ENCODE measurements at regions of chr12 and their contacts with region 1.

Region 1: GRCh38 chr12:12356886-12357718 is at the start of gene BORCS5:
- DNase-seq: peak; percentile 100
- ATAC-seq: peak; percentile 92
- H3K4me3 ChIP-seq: peak within 1 kb of the TSS; percentile 74 to 93 (median 81)
- H3K4me3 Mint-ChIP-seq: peak within 1 kb of the TSS; percentile 92
- H3K27ac ChIP-seq: peak within 1 kb of the TSS; percentile 91 to 95
- H3K27ac Mint-ChIP-seq: peak within 1 kb of the TSS; percentile 94
- H3K4me1 ChIP-seq: peaks cover 21 to 25% of the 10 kb centered on the region in 2 donors
- H3K4me1 Mint-ChIP-seq: peaks cover 31% of the 10 kb centered on the region
- H3K27me3 ChIP-seq: no peaks in the 10 kb centered on the region
- H3K27me3 Mint-ChIP-seq: peaks cover 3% of the 10 kb centered on the region
- CTCF ChIP-seq: peak; percentile 11
- total RNA-seq, gene BORCS5: 46.2 and 51.7 TPM in 2 replicates

Region 2: DNA sequence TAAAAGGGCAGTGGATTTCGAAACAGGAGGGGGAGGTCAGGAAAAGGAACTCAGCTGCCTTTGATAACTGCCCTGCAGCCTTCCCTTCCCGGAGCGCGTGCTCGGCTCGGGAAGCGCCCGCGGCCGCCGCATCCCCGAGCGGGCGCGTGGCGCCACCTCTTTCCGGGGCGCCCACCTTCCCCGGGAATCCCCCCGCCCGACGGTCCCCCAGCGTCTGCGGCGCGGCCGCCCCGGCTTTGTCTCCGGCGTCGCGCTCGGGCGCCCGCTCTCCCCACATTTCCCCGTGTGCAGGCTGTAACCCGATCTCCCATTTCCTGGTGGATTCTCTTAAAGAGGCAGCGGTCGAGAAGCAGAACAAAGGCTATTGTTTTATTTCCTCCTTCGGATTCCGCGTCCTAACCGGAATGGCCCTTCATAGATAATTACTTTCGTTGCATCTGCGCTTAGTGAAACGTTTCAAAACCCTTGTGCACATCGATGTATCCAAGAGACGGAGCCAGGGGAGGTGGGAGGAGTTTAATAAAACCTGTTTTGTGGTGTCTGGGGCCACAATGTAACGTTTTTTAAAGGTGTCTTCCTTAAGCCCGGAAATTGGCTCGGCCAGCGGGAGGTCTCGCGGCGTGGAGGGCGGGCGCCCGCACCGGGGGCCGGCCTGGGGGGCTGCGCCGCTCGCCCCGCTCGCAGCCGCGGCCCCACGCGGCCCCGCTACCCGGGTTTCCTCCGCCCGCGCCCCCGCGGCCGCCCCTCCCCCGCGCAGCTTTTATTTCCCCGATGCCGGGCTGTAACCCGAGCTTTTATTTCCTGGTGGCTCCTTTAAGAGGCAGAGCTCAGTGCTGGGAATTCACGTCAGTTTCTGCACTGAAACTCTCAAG is 708.0 kb before region 1 on chr12 and contains the start of gene ETV6:
- CTCF ChIA-PET with region 1: no interaction called
- POLR2A ChIA-PET with region 1: no interaction called
- intact Hi-C with region 1: loop called (anchors 5 kb)
- DNase-seq: peak; percentile 86
- ATAC-seq: peak; percentile 48
- H3K4me3 ChIP-seq: peak within 1 kb of the TSS; percentile 77 to 96 (median 87)
- H3K4me3 Mint-ChIP-seq: peak within 1 kb of the TSS; percentile 93
- H3K27ac ChIP-seq: peak within 1 kb of the TSS; percentile 72 to 81
- H3K27ac Mint-ChIP-seq: peak within 1 kb of the TSS; percentile 97
- H3K4me1 ChIP-seq: peaks cover 24 to 29% of the 10 kb centered on the region in 2 donors
- H3K4me1 Mint-ChIP-seq: peaks cover 34% of the 10 kb centered on the region
- H3K27me3 ChIP-seq: no peaks in the 10 kb centered on the region
- H3K27me3 Mint-ChIP-seq: no peaks in the 10 kb centered on the region
- CTCF ChIP-seq: no peak
- total RNA-seq, gene ETV6: 123 and 131 TPM in 2 replicates

Region 3: DNA sequence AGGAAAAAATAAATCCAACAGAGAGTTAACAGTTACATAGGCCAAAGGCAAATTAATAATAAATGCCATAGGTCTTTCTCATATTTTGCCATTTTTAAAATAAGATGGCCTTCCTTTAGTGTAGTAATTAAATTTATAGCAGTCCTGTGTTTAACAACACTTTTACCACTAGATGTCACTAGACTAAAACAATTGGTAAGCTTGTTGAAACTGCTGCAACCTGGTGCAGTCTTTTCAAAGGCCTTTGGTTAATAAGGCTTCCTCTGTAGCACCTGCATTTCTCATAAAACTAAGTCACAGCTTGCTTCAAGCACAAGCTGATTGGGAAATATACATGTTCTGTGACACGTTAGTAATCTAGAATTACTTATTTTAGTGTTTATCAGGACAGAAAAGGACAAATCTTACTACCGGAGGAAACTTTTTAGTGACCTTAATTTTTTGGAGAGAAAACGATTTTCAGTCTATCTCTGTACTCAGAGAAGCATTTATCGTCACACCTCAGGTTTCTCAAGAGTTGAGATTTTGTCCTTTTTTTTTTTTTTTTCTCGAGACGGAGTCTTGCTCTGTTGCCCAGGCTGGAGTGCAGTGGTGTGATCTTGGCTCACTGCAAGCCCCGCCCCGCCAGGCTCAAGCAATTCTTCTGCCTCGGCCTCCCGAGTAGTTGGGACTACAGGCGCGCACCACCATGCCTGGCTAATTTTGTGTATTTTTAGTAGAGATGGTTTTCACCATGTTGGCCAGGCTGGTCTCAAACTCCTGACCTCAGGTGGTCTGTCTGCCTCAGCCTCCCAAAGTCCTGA is 19.7 kb after region 1 on chr12:
- CTCF ChIA-PET with region 1: interaction called, 20 read pairs
- POLR2A ChIA-PET with region 1: no interaction called
- intact Hi-C with region 1: loop called (anchors 1 kb)
- DNase-seq: peak; percentile 78
- ATAC-seq: peak; percentile 64
- H3K4me3 ChIP-seq: no peak overlapping the region
- H3K4me3 Mint-ChIP-seq: no peak overlapping the region
- H3K27ac ChIP-seq: no peak overlapping the region
- H3K27ac Mint-ChIP-seq: no peak overlapping the region
- H3K4me1 ChIP-seq: peaks cover 10 to 12% of the 10 kb centered on the region in 2 donors
- H3K4me1 Mint-ChIP-seq: peaks cover 21% of the 10 kb centered on the region
- H3K27me3 ChIP-seq: no peaks in the 10 kb centered on the region
- H3K27me3 Mint-ChIP-seq: no peaks in the 10 kb centered on the region
- CTCF ChIP-seq: peak; percentile 79

Region 4: DNA sequence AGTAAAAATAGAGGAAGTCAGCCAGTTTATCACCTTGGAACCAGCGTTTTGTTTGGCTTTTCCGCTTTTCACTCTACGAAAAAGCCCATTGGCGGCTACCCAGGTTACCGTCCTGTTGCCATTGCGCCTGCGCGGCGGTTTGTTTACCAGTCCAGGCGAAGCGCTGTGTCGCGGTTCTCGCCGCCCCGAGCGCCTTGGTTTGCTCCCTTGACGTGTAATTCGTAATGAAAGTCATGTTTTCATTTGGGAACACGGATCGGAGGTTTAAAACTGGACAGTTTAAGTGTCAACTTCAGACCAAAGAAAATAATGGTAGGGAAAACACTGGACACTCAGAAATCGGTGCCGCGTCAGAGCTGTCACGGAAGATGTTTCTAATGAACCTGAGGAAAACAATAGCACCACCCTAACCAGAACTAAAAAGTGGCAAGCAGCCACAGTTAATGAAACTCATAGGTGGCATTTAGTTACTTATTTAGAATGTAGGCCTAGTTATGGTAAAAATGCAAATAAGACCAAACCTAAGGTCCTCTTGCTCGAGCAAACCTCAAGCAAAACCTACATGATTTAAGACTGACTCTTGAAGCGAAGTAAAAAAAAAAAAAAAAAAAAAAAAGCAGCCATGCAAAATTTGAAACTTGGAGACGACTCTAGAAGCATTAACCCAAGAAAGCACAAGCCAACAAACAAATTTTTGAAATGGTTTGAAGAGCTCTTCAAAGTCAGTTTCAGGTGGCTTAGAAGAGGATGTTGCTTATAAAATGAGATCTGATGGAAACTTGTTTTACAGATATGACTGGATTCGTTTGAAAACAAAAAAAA is 339.7 kb after region 1 on chr12:
- CTCF ChIA-PET with region 1: interaction called, 5 read pairs
- POLR2A ChIA-PET with region 1: interaction called, 19 read pairs
- intact Hi-C with region 1: loop called (anchors 1 kb)
- DNase-seq: peak; percentile 95
- ATAC-seq: peak; percentile 86
- H3K4me3 ChIP-seq: peak overlapping the region; percentile 66 to 77 (median 68)
- H3K4me3 Mint-ChIP-seq: peak overlapping the region; percentile 99
- H3K27ac ChIP-seq: peak overlapping the region; percentile 97 to 98
- H3K27ac Mint-ChIP-seq: peak overlapping the region; percentile 100
- H3K4me1 ChIP-seq: peaks cover 15 to 23% of the 10 kb centered on the region in 2 donors
- H3K4me1 Mint-ChIP-seq: peaks cover 32% of the 10 kb centered on the region
- H3K27me3 ChIP-seq: no peaks in the 10 kb centered on the region
- H3K27me3 Mint-ChIP-seq: no peaks in the 10 kb centered on the region
- CTCF ChIP-seq: no peak

Region 5: DNA sequence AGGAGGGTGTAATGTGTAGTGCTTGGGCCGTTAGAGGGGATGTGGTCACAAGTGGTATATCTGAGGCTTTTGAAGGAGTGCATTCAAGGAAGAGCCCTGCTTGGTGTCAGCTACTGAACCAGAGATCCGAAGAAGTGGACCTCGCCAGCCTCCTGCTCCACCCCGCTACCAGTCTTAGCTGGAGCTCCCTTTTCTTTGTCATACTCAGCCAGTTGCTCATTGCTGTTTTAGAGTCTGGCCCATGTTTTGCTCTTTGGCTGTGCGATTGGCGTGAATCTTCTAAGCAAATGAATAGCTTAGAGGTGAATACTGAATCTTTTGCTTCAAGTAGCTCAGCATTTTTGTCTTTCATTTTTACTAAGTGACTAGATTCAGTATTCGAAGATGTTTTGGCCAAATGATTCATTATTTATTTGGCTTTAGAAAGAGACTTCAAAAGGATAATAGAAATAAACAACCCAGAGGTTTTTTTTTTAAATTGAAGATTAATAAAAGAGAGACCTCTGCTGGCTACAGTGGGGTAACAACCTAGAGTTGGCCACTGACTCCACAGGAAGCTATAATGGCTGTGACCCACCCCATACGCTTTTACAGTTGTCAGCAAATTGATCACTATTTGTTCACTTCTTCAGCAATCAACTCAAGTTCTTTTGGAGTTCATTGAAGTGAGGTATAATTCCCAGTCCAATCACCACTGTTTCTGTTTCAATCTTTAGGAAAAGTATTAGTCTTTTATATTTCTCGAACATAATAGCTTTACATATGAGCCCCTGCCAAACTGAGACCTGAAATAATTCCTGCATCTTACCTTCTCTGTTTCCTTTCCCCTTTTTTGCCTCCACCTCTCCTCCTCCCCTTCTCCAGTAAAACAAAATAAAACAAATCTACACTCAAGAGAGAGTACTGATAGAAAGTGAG is 379.9 kb after region 1 on chr12:
- CTCF ChIA-PET with region 1: interaction called, 47 read pairs
- POLR2A ChIA-PET with region 1: interaction called, 7 read pairs
- intact Hi-C with region 1: no loop called
- DNase-seq: peak; percentile 72
- ATAC-seq: peak; percentile 87
- H3K4me3 ChIP-seq: peak overlapping the region in 3 of 5 experiments; percentile 7 to 49 (median 44)
- H3K4me3 Mint-ChIP-seq: peak overlapping the region; percentile 66
- H3K27ac ChIP-seq: peak overlapping the region; percentile 32 to 64
- H3K27ac Mint-ChIP-seq: peak overlapping the region; percentile 85
- H3K4me1 ChIP-seq: peaks cover 6 to 14% of the 10 kb centered on the region in 2 donors
- H3K4me1 Mint-ChIP-seq: peaks cover 14% of the 10 kb centered on the region
- H3K27me3 ChIP-seq: no peaks in the 10 kb centered on the region
- H3K27me3 Mint-ChIP-seq: no peaks in the 10 kb centered on the region
- CTCF ChIP-seq: peak; percentile 81

Region 6: DNA sequence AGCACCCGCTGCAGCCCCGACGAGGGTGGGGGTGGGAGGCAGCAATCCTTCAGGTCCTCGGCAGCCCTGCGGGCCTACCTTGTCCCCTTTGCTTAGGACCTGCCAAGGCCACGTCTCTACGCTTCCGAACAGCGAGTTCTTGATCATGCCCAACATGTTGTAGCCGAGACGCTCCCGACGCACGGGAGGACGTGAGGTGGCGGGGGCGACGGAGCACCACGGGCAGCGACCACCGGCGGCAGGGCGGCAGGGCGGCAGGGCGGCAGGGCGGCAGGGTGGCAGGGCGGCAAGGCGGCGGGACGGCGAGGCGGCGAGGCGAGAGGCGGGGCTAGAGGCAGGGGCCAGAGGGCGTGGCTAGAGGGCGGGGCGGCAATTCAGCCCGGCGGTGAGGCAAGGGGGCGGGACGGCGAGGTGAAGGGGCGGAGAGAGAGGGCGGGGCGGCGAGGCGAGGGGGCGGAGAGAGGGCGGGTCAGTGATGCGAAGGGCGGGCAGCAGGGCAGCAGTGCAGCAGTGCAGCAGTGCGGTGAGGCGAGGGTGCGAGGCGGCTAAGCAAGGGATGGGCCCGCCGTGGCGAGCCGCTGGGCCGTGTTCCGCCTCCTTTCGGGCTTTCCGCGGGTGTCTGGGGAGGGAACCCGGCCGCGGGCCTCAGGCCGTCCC is 643.0 kb after region 1 on chr12 and contains the start of gene HEBP1:
- CTCF ChIA-PET with region 1: no interaction called
- POLR2A ChIA-PET with region 1: no interaction called
- intact Hi-C with region 1: loop called (anchors 5 kb)
- DNase-seq: peak; percentile 96
- ATAC-seq: peak; percentile 89
- H3K4me3 ChIP-seq: peak within 1 kb of the TSS; percentile 63 to 92 (median 81)
- H3K4me3 Mint-ChIP-seq: peak within 1 kb of the TSS; percentile 90
- H3K27ac ChIP-seq: peak within 1 kb of the TSS; percentile 61 to 63
- H3K27ac Mint-ChIP-seq: peak within 1 kb of the TSS; percentile 80
- H3K4me1 ChIP-seq: peaks cover 11 to 20% of the 10 kb centered on the region in 2 donors
- H3K4me1 Mint-ChIP-seq: peaks cover 29% of the 10 kb centered on the region
- H3K27me3 ChIP-seq: peaks cover 0 to 3% (median 0%) of the 10 kb centered on the region in 4 experiments
- H3K27me3 Mint-ChIP-seq: no peaks in the 10 kb centered on the region
- CTCF ChIP-seq: no peak
- total RNA-seq, gene HEBP1: 11.2 and 14.5 TPM in 2 replicates